Calu3 (cell line): ENCODE measurements at regions of chr12 and their contacts with region 1.

Region 1: DNA sequence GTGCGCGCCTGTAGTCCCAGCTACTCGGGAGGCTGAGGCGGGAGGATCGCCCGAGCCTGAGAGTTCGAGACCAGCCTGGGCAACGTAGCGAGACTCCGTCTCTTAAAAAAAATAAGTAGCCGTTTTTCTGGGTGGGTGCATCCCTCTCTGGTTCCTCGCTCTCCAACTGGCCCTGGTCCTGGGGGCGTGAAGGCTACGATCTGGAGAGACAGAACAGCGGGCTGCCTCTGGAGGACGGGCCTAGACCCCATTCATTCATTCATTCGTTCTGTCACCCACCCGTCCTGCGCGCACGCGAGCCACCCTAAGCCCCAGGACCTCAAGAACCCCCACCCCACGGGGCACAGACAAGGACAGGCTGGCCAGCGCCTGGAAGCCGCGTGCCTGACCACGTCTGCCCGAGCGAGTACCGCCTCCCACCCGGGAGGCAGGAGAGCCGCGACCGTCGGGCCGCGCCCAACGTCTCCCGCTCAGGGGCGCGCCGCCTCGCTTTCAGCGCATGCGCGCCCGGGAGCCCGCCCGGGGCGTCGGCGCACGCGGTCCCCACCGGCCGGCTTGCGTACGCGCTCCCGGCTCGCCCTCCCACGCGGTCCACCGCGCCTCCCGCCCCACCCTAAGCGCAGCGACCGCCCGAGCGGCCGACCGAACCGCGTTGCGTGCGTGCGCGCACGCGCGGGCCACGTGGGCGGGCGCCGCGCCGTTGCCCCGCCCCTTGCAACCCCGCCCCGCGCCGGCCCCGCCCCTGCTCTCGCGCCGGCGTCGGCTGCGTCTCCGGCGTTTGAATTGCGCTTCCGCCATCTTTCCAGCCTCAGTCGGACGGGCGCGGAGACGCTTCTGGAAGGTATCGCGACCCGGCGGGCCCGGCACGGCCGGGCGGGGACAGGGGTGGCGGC is at the start of gene RAN:
- DNase-seq: peak; percentile 97
- H3K4me3 Mint-ChIP-seq: peak within 1 kb of the TSS; percentile 93
- H3K27ac Mint-ChIP-seq: peak within 1 kb of the TSS; percentile 94
- H3K4me1 Mint-ChIP-seq: peaks cover 35% of the 10 kb centered on the region
- H3K27me3 Mint-ChIP-seq: no peaks in the 10 kb centered on the region
- CTCF ChIP-seq: no peak
- total RNA-seq, gene RAN: 1,463 and 1,538 TPM in 2 replicates

Region 2: DNA sequence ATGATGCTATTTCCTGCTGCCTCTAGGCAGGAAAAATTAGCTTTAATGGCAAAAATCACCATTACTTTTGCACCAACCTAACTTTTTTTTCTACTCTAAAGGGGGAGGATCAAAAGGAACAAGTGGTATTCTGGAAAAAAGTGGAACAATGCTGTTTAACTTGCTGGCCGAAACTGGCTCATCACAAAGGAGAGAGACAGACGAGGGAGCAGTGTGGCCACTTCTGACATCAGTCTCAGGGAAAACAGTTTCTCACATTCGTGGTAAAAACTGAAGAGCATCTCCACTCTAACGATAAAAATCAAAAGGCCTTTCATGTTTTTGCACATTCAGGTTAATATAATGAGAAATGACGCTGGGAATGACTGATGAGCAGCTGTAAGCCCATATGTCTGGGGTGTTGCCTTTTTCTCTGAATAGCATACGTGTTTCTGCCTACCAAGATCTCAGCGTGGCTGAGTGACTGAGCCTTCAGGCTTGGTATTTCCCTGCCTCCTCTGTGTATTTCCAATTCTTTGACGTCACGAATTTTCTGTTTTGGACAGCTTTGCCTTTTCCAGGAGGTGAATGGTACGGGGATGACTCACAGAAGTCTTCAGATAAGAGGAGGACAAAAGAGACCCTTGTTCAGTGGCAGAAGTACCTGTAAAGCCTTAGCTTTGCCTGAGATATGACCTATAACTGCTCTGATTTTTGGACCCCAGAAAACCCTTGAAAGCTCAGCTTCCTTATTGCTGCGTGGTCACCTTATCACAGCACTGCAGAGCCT is 1659.5 kb before region 1 on chr12:
- CTCF ChIA-PET with region 1: no interaction called
- intact Hi-C with region 1: loop called (anchors 10 kb)
- DNase-seq: peak; percentile 78
- H3K4me3 Mint-ChIP-seq: peak overlapping the region; percentile 44
- H3K27ac Mint-ChIP-seq: peak overlapping the region; percentile 98
- H3K4me1 Mint-ChIP-seq: peaks cover 48% of the 10 kb centered on the region
- H3K27me3 Mint-ChIP-seq: no peaks in the 10 kb centered on the region
- CTCF ChIP-seq: no peak

Region 3: DNA sequence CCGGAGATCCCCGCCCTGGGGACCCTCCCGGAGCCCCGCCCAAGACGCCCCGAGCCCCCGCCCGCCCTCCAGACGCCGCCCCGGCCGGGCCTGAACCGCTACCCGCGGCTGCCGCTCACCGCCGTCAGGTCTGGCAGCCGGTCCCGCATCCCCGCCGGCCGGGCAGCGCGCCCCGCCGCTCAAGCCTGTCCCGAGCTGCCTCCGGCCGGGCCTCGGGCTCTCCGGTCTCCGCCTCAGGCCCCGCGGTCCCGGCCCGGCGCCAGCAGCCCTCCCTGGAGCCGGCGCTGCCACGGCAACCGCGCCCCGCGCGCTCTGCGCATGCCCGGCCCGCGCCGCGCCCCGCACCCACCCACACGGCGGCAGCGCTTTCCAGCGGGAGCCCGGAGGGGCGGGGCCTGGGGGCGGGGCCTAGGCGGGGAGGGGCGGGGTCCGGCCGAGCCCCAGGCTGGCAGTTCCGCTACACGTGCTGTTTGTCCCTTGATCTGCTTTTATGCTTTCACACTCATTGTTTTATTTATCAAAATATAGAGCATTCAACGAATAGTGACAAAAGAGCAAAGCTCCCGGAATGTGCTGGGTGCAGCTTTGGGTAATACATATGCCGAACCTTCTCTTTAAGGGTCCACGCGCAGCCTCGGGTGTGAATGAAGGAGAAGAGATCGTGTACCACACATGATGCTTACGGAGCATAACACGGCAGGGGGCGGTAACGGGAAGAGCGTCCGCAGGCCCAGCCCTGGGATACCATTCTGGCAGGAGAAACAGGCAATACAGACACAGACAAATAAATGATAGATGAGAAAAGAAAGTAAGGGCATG is 32.4 kb before region 1 on chr12 and contains the start of gene STX2:
- CTCF ChIA-PET with region 1: interaction called, 4 read pairs
- intact Hi-C with region 1: loop called (anchors 5 kb)
- DNase-seq: peak; percentile 97
- H3K4me3 Mint-ChIP-seq: peak within 1 kb of the TSS; percentile 86
- H3K27ac Mint-ChIP-seq: peak within 1 kb of the TSS; percentile 78
- H3K4me1 Mint-ChIP-seq: peaks cover 19% of the 10 kb centered on the region
- H3K27me3 Mint-ChIP-seq: no peaks in the 10 kb centered on the region
- CTCF ChIP-seq: peak; percentile 31
- total RNA-seq, gene STX2: 21.0 and 26.7 TPM in 2 replicates

Region 4: GRCh38 chr12:130849561-130850417 is 21.7 kb before region 1 on chr12:
- CTCF ChIA-PET with region 1: interaction called, 9 read pairs
- intact Hi-C with region 1: loop called (anchors 2 kb)
- DNase-seq: peak; percentile 68
- H3K4me3 Mint-ChIP-seq: peak overlapping the region; percentile 33
- H3K27ac Mint-ChIP-seq: peak overlapping the region; percentile 57
- H3K4me1 Mint-ChIP-seq: peaks cover 36% of the 10 kb centered on the region
- H3K27me3 Mint-ChIP-seq: no peaks in the 10 kb centered on the region
- CTCF ChIP-seq: no peak